H1 (cell line): ENCODE measurements at regions of chr4 and their contacts with region 1.

Region 1: DNA sequence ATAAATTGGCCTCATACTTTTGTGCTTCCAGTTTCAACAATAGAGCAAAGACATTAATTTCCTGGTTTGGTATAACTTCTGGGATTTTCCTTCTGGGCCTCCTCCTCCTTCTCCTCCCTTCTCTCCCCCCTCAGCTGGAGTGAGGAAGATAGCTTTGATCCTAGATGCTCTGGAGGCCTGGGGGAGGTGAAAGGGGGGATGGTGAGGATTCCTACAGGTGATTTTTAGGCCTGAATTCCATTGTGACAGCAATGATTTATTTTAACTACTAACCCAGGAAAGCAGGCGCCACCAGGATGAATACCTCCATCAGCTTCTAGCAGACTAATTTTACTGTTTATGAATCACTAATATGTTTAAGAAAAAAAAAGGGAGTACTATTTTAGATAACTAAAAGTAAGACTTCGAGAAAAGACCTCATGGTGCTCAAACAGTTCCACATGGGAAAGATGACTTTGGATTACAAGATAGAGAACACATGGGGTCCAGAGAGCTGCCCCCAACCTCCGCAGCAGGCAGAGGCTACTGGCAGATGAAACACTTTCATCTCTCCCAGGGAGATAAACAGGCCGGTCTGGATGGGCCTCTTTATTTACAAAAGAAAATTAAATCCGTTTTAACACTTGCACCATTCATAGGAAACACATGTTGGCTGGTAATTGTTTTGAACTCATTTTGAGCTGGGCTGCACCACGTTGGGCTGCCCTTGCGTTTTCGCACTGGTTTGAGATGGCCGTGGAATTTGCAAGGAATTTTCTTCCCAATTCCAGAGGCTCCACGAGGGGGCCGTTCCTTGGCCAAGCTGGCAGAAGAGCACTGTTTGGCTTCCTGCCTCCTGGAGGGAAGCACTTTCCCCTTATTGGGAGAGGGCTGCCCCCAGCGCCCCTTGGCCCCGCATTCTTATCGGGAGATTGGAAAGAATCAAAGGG is 125.1 kb upstream of the STX18 start:
- DNase-seq: no peak
- H3K4me3 ChIP-seq: peak overlapping the region; percentile 12 to 52 (median 22); a peak in 7 of 8 replicates
- H3K27ac ChIP-seq: peak overlapping the region; percentile 73; the same call in 1 of the 2 replicates
- H3K4me1 ChIP-seq: peaks cover 14 to 25% (median 19%) of the 10 kb centered on the region in 4 experiments
- H3K27me3 ChIP-seq: no peaks in the 10 kb centered on the region; a peak in 2 of 7 replicates
- CTCF ChIP-seq: no peak
- EP300 ChIP-seq: no peak
- POLR2A ChIP-seq: no peak
- RAD21 ChIP-seq: no peak; a peak in 1 of 4 replicates

Region 2: GRCh38 chr4:4640692-4641091 is 26.3 kb before region 1 on chr4:
- CTCF ChIA-PET with region 1: interaction called, 8 read pairs
- POLR2A ChIA-PET with region 1: interaction called, 11 read pairs
- DNase-seq: peak in 1 of 2 experiments; percentile 58
- H3K4me3 ChIP-seq: peak overlapping the region in 3 of 4 experiments; percentile 0 to 40 (median 7); a peak in 4 of 8 replicates
- H3K27ac ChIP-seq: no peak overlapping the region
- H3K4me1 ChIP-seq: peaks cover 8 to 19% (median 18%) of the 10 kb centered on the region in 4 experiments; a peak in 6 of 7 replicates
- H3K27me3 ChIP-seq: peaks cover 0 to 4% (median 0%) of the 10 kb centered on the region in 4 experiments; a peak in 1 of 7 replicates
- CTCF ChIP-seq: 0 out of 4 replicates have a peak, but pooled peaks of 1 of the 3 experiments have one; percentile 5
- EP300 ChIP-seq: no peak
- POLR2A ChIP-seq: no peak
- RAD21 ChIP-seq: no peak; a peak in 1 of 4 replicates

Region 3: GRCh38 chr4:4651811-4652755 is 14.9 kb before region 1 on chr4:
- CTCF ChIA-PET with region 1: interaction called, 36 read pairs
- POLR2A ChIA-PET with region 1: interaction called, 7 read pairs
- DNase-seq: no peak
- H3K4me3 ChIP-seq: no peak overlapping the region
- H3K27ac ChIP-seq: no peak overlapping the region
- H3K4me1 ChIP-seq: peaks cover 0 to 3% (median 1%) of the 10 kb centered on the region in 4 experiments; a peak in 2 of 7 replicates
- H3K27me3 ChIP-seq: no peaks in the 10 kb centered on the region
- CTCF ChIP-seq: no peak
- EP300 ChIP-seq: no peak
- POLR2A ChIP-seq: no peak
- RAD21 ChIP-seq: no peak

Region 4: GRCh38 chr4:4712800-4713528 is 46.0 kb after region 1 on chr4:
- CTCF ChIA-PET with region 1: no interaction called
- POLR2A ChIA-PET with region 1: no interaction called
- DNase-seq: no peak
- H3K4me3 ChIP-seq: no peak overlapping the region
- H3K27ac ChIP-seq: no peak overlapping the region
- H3K4me1 ChIP-seq: peaks cover 0 to 4% (median 0%) of the 10 kb centered on the region in 4 experiments; a peak in 1 of 7 replicates
- H3K27me3 ChIP-seq: peaks cover 0 to 3% (median 2%) of the 10 kb centered on the region in 4 experiments; a peak in 3 of 7 replicates
- CTCF ChIP-seq: no peak
- EP300 ChIP-seq: no peak
- POLR2A ChIP-seq: no peak
- RAD21 ChIP-seq: no peak

Region 5: DNA sequence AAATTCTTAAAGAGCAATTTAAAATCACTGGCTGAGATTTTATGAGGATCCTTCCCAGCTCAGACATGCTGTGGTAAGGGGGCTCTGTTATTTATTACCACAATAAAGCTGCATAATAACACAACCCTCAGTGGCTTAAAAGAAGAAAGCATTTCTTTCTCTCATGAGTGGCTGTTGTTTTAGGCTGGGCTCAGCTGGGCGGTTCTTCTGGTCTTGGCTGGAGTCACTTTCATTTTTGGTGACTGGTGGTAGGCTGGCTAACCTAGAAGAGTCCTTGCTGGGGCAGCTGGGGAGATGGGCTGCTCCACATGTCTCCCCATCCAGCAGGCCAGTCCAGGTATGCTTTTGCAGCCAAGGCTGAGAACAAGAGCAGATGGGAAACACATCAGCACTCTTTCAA is 79.5 kb after region 1 on chr4:
- CTCF ChIA-PET with region 1: no interaction called
- POLR2A ChIA-PET with region 1: no interaction called
- DNase-seq: no peak
- H3K4me3 ChIP-seq: no peak overlapping the region
- H3K27ac ChIP-seq: no peak overlapping the region
- H3K4me1 ChIP-seq: peaks cover 0 to 2% (median 0%) of the 10 kb centered on the region in 4 experiments; a peak in 1 of 7 replicates
- H3K27me3 ChIP-seq: no peaks in the 10 kb centered on the region
- CTCF ChIP-seq: no peak
- EP300 ChIP-seq: no peak
- POLR2A ChIP-seq: no peak
- RAD21 ChIP-seq: no peak

Region 6: GRCh38 chr4:4762909-4763821 is 96.2 kb after region 1 on chr4:
- CTCF ChIA-PET with region 1: interaction called, 12 read pairs
- POLR2A ChIA-PET with region 1: no interaction called
- DNase-seq: peak in 1 of 2 experiments; percentile 63
- H3K4me3 ChIP-seq: peak overlapping the region in 1 of 4 experiments; percentile 17; a peak in 3 of 8 replicates
- H3K27ac ChIP-seq: no peak overlapping the region
- H3K4me1 ChIP-seq: peaks cover 3 to 27% (median 20%) of the 10 kb centered on the region in 4 experiments
- H3K27me3 ChIP-seq: peaks cover 0 to 26% (median 12%) of the 10 kb centered on the region in 4 experiments; a peak in 5 of 7 replicates
- CTCF ChIP-seq: 0 out of 4 replicates have a peak, but pooled peaks of 1 of the 3 experiments have one; percentile 4
- EP300 ChIP-seq: no peak
- POLR2A ChIP-seq: no peak
- RAD21 ChIP-seq: no peak

Region 7: DNA sequence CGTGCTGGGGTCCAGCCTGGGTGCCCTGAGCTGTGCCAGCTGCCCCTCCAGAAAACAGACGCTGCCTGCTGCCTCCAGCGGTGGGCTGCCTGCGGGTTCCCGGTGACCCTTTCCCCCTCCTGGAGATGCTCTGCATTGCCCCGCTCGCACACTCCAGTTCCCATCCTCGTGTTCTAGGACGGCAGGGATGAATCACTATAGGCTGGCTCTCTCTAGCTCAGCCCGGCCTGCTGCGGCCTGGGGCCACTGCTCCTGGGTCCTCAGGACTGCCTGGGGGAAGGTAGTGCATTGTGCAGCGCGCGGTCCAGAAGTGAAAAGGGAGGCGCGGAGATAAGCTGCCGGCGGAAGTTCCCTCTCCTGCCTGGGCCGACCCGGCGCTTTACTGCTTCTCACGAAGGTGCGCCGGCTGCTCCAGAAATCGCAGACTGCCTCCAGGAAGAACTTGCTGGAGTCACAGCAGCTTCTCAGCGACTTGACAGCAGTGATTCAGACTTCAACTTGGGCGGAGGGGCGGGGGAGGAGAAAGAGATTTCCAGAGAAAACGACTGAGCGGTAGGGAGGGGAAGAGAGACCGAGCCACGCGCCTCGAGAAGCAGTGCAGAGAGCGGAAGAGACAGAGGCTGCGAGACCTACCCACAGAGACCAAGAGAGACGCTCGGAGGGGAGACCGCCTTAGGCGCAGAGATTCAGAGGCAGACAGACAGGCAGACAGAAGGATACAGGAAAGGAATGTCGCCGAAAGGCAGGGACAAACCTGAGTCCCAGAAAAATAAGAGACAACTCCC is 185.8 kb after region 1 on chr4:
- CTCF ChIA-PET with region 1: interaction called, 12 read pairs
- POLR2A ChIA-PET with region 1: interaction called, 5 read pairs
- DNase-seq: peak in 1 of 2 experiments; percentile 78
- H3K4me3 ChIP-seq: peak overlapping the region in 2 of 4 experiments; percentile 8 to 47; a peak in 5 of 8 replicates
- H3K27ac ChIP-seq: no peak overlapping the region
- H3K4me1 ChIP-seq: peaks cover 0 to 16% (median 8%) of the 10 kb centered on the region in 4 experiments; a peak in 6 of 7 replicates
- H3K27me3 ChIP-seq: peaks cover 78 to 93% (median 87%) of the 10 kb centered on the region in 4 experiments
- CTCF ChIP-seq: peak in 2 of 3 experiments; percentile 60 to 86; a peak in 3 of 4 replicates
- EP300 ChIP-seq: no peak
- POLR2A ChIP-seq: no peak
- RAD21 ChIP-seq: peak; percentile 55 to 66